ENCODE measurements at regions of chr15 and their contacts with region 1.

Region 1: GRCh38 chr15:101641166-101641764 is 10.9 kb downstream of the TM2D3 start:
- DNase-seq: peak; percentile 85
- ATAC-seq: peak; percentile 81
- H3K4me3 Mint-ChIP-seq: peak overlapping the region; percentile 17
- H3K27ac Mint-ChIP-seq: peak overlapping the region; percentile 77
- H3K4me1 Mint-ChIP-seq: peaks cover 19% of the 10 kb centered on the region
- H3K27me3 Mint-ChIP-seq: no peaks in the 10 kb centered on the region

Region 2: DNA sequence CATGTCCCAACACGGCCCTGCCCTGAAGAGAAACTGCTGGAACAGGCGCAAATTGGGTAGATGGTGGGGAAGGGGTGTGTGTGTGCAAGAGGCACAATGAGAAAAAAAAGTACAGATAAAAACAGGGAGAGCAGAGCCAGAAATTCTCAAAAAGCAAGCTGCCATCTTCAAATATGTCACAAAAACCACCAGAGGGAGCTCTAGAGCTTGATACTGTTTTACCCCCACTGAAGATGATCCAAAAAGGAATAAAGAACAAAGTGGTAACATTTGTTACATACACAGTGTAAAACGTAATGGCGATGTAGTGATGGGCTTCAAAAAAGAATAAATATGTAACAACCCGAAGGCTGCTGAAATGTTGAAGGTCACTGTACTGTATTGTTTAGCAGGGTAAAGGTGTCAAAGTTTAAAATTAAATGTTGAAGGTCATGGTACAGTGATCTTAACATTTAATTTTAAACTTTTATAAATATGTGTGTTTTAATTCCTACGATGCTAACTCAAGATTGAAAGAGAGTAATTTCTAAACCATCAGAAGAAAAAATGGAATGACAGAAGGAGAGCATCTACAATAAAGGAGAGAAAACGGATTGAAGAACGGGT is 352.3 kb before region 1 on chr15:
- CTCF ChIA-PET with region 1: interaction called, 44 read pairs
- DNase-seq: no peak
- ATAC-seq: peak; percentile 52
- H3K4me3 Mint-ChIP-seq: no peak overlapping the region
- H3K27ac Mint-ChIP-seq: peak overlapping the region; percentile 70
- H3K4me1 Mint-ChIP-seq: peaks cover 61% of the 10 kb centered on the region
- H3K27me3 Mint-ChIP-seq: no peaks in the 10 kb centered on the region

Region 3: GRCh38 chr15:101294731-101295606 is 346.3 kb before region 1 on chr15 and contains the start of gene SNRPA1:
- CTCF ChIA-PET with region 1: interaction called, 44 read pairs
- DNase-seq: peak; percentile 97
- ATAC-seq: peak; percentile 89
- H3K4me3 Mint-ChIP-seq: peak within 1 kb of the TSS; percentile 95
- H3K27ac Mint-ChIP-seq: peak within 1 kb of the TSS; percentile 94
- H3K4me1 Mint-ChIP-seq: peaks cover 44% of the 10 kb centered on the region
- H3K27me3 Mint-ChIP-seq: no peaks in the 10 kb centered on the region
- total RNA-seq, gene SNRPA1: 132 to 151 TPM

Region 4: GRCh38 chr15:101303408-101303807 is 337.9 kb before region 1 on chr15:
- CTCF ChIA-PET with region 1: interaction called, 14 read pairs
- DNase-seq: no peak
- ATAC-seq: no peak
- H3K4me3 Mint-ChIP-seq: no peak overlapping the region
- H3K27ac Mint-ChIP-seq: no peak overlapping the region
- H3K4me1 Mint-ChIP-seq: no peaks in the 10 kb centered on the region
- H3K27me3 Mint-ChIP-seq: no peaks in the 10 kb centered on the region

Region 5: DNA sequence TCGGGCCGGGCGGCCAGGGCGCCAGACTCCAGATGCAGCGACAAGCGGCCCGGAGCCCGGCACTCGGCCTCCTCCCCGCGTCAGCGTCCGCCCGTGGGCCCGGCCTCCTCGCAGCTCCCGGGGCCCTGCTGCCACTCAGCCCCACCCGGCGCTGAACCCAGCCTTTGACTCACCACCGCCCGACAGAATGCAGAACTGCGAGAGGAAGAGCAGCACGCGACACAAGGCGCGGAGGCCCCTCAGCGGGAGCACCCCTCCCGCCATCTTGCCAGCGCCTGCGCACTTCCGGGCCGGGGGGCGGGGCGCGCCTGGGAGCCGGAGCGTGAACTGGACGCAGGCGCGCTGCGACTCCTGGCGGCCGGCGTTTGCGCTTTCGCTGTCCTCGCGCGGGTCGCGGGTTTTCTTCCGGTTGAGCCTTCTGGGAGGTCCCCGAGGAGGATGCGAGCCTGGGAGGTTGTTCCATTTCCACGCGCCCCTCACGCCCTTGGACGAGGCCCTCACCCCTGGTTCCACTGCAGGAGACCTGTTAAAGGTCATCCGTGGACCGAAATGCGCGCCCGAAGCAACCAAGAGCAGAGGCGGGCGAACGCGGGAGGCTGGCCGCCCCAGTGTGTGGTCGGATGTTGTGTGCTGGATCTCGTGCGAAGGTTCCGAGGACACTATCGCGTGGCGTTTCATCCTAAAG is 11.0 kb after region 1 on chr15 and contains the start of gene TM2D3:
- CTCF ChIA-PET with region 1: interaction called, 37 read pairs
- DNase-seq: peak; percentile 96
- ATAC-seq: peak; percentile 92
- H3K4me3 Mint-ChIP-seq: peak within 1 kb of the TSS; percentile 93
- H3K27ac Mint-ChIP-seq: peak within 1 kb of the TSS; percentile 96
- H3K4me1 Mint-ChIP-seq: peaks cover 46% of the 10 kb centered on the region
- H3K27me3 Mint-ChIP-seq: no peaks in the 10 kb centered on the region
- total RNA-seq, gene TM2D3: 43.2 to 51.6 TPM

Measured in activated CD8-positive, alpha-beta memory T cell treated with anti-CD3 and anti-CD28 coated beads, Interleukin-2, amount 10 ng/mL, durations not matched to agents 7 days and 5 days (primary cell).